ENCODE measurements at regions of chr11 and their contacts with region 1.

Region 1: GRCh38 chr11:9757809-9758636 is 94.1 kb downstream of the SWAP70 start:
- DNase-seq: peak; percentile 57
- H3K4me3 ChIP-seq: peak overlapping the region; percentile 41 to 47 (median 43)
- H3K27ac ChIP-seq: peak overlapping the region; percentile 79
- H3K4me1 ChIP-seq: peaks cover 72% of the 10 kb centered on the region
- H3K27me3 ChIP-seq: no peaks in the 10 kb centered on the region
- CTCF ChIP-seq: peak; percentile 42 to 55

Region 2: DNA sequence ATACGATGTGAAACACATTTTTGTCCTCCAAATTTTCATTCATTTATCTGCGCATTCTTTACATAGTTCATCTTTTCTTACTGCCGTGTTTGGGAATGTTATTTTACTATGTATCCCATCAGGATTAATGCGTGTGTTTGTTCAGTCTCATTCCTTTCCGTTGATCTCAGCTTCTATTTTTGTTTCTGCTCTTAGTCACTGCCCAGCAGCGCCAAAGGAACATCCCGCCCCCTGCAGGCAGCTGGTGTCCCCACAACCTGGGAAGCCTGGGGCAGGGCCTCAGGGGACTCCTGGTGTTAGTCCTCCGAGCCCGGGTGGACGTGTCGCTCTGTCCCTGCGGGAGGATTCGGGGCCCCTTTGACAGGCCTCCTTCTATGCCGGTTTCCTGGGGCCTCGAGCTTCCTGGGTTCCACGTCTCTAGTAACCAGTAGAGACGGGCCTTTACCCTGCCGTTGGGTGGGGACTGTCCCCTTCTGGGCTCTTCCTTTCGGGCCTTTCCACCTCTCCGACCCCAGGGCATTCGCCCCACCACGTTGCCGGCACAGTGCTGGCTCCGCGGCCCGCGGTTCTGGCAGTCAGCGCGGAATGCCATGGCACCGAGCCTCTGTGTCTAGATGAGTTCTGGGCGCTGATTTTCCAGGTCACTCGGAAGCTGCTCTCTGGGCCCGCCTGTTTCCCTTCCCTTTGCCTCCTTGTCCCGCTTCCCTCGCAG is 144.7 kb before region 1 on chr11:
- CTCF ChIA-PET with region 1: no interaction called
- dilution Hi-C with region 1: no loop called
- in situ Hi-C with region 1: no loop called
- intact Hi-C with region 1: loop called (anchors 1 kb)
- DNase-seq: peak; percentile 88
- H3K4me3 ChIP-seq: peak overlapping the region; percentile 6 to 26 (median 21)
- H3K27ac ChIP-seq: peak overlapping the region; percentile 91
- H3K4me1 ChIP-seq: peaks cover 27% of the 10 kb centered on the region
- H3K27me3 ChIP-seq: no peaks in the 10 kb centered on the region
- CTCF ChIP-seq: peak; percentile 78 to 97

Region 3: DNA sequence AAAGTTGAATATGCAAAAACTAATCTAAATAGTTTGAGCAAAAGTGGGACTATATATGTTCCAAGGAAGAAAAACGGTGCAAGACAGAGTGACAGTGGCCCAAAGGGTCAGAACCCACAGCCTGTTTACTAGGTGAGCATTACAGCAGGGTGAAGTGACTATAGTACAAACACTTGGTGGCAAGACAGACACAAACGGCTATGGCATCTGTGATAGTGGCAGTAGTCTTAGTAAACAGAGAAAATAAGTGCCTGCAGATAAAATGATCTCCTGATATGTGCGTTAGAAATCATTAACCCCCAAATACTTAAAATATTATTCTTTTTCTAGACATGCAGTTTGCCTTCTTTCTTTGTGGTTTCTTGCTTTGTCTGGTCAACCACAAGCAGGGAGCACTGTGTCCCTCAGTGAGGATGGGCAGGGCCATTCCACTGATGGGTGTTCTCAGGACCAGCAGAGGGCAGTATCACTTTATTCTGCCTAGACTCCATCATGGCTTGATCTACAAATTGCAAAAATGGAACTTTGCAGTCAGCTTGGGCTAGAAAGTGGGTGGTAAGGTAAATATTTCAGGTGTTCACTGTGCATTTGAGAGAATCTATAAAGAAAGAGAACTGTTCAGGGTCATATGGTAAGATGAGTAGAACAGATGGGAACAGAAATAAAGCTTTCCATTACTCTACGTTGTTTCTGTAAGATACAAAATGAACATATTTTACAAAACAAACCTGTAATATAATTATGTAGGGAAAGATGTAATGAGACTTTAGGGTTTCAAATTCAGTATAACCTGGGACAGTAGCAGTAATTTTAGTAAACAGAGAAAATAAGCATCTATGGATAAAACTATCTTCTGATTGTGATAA is 104.1 kb after region 1 on chr11:
- CTCF ChIA-PET with region 1: interaction called, 3 read pairs
- dilution Hi-C with region 1: no loop called
- in situ Hi-C with region 1: no loop called
- intact Hi-C with region 1: loop called (anchors 1 kb)
- DNase-seq: peak; percentile 60
- H3K4me3 ChIP-seq: no peak overlapping the region
- H3K27ac ChIP-seq: no peak overlapping the region
- H3K4me1 ChIP-seq: peaks cover 6% of the 10 kb centered on the region
- H3K27me3 ChIP-seq: no peaks in the 10 kb centered on the region
- CTCF ChIP-seq: peak; percentile 90 to 91

Region 4: GRCh38 chr11:10076458-10077141 is 318.6 kb after region 1 on chr11:
- CTCF ChIA-PET with region 1: no interaction called
- dilution Hi-C with region 1: no loop called
- in situ Hi-C with region 1: no loop called
- intact Hi-C with region 1: loop called (anchors 2 kb)
- DNase-seq: peak; percentile 6
- H3K4me3 ChIP-seq: no peak overlapping the region
- H3K27ac ChIP-seq: no peak overlapping the region
- H3K4me1 ChIP-seq: no peaks in the 10 kb centered on the region
- H3K27me3 ChIP-seq: no peaks in the 10 kb centered on the region
- CTCF ChIP-seq: peak; percentile 61 to 72

Region 5: GRCh38 chr11:10307442-10308207 is 549.6 kb after region 1 on chr11:
- CTCF ChIA-PET with region 1: no interaction called
- dilution Hi-C with region 1: loop called (anchors 5 kb)
- in situ Hi-C with region 1: loop called (anchors 10 to 25 kb)
- intact Hi-C with region 1: loop called (anchors 1 kb)
- DNase-seq: peak; percentile 92
- H3K4me3 ChIP-seq: peak overlapping the region; percentile 62 to 80 (median 72)
- H3K27ac ChIP-seq: peak overlapping the region; percentile 54
- H3K4me1 ChIP-seq: peaks cover 45% of the 10 kb centered on the region
- H3K27me3 ChIP-seq: no peaks in the 10 kb centered on the region
- CTCF ChIP-seq: peak; percentile 87 to 92

Region 6: DNA sequence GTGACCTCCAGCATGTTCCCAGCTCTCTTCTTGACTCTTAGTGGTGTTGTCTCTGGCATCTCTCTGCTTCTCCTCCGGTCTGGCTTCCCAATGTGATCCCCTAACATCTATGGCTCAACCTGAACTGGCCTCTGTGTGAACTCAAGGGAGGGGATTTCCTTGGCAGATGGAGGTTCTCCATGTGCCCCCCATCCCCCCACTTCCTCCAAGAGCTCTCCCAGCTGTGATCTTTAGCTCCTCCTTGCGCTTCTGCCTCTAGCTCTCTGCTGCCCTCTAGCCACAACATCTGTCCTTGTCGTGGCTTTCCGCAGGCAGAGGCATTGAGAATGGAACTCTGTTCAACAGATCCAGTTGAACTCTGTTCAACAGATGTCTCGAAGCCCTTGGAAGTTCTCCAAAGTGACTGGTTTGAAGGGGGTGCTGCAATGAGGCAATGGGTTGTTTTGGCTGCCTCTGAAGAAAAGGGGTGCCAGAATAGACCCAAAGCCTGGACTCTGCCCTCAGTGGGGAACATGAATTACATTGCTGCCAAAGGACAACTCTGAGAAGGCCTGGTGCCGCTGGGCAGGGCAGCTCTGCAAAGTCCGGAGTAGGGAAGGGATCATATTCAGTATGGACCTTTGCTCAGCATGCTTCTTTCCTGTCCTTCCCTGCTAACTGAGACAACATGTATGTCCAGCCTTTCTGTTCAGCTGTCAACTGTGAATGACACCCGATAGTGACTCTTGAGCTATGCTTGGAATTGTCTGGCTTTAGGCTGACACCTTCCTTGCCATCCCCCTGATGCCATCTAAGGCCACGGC is 608.7 kb after region 1 on chr11:
- CTCF ChIA-PET with region 1: no interaction called
- dilution Hi-C with region 1: no loop called
- in situ Hi-C with region 1: no loop called
- intact Hi-C with region 1: loop called (anchors 1 kb)
- DNase-seq: peak; percentile 93
- H3K4me3 ChIP-seq: no peak overlapping the region
- H3K27ac ChIP-seq: peak overlapping the region; percentile 5
- H3K4me1 ChIP-seq: peaks cover 6% of the 10 kb centered on the region
- H3K27me3 ChIP-seq: no peaks in the 10 kb centered on the region
- CTCF ChIP-seq: peak; percentile 97